H1 (cell line): ENCODE measurements at regions of chr10 and their contacts with region 1.

Region 1: GRCh38 chr10:80662577-80663261 is 125.0 kb downstream of the SH2D4B start:
- DNase-seq: peak; percentile 75 to 98
- H3K4me3 ChIP-seq: peak overlapping the region in 3 of 4 experiments; percentile 21 to 51 (median 43); a peak in 5 of 8 replicates
- H3K27ac ChIP-seq: no peak overlapping the region
- H3K4me1 ChIP-seq: peaks cover 0 to 4% (median 3%) of the 10 kb centered on the region in 4 experiments; a peak in 3 of 7 replicates
- H3K27me3 ChIP-seq: peaks cover 0 to 2% (median 0%) of the 10 kb centered on the region in 4 experiments; a peak in 2 of 7 replicates
- CTCF ChIP-seq: peak; percentile 83 to 88 (median 86)
- EP300 ChIP-seq: no peak
- POLR2A ChIP-seq: no peak
- RAD21 ChIP-seq: peak; percentile 79 to 82

Region 2: GRCh38 chr10:80647173-80647811 is 15.4 kb before region 1 on chr10:
- CTCF ChIA-PET with region 1: interaction called, 88 read pairs
- POLR2A ChIA-PET with region 1: interaction called, 3 read pairs
- DNase-seq: no peak
- H3K4me3 ChIP-seq: no peak overlapping the region
- H3K27ac ChIP-seq: no peak overlapping the region
- H3K4me1 ChIP-seq: no peaks in the 10 kb centered on the region
- H3K27me3 ChIP-seq: no peaks in the 10 kb centered on the region
- CTCF ChIP-seq: no peak
- EP300 ChIP-seq: no peak
- POLR2A ChIP-seq: no peak
- RAD21 ChIP-seq: no peak

Region 3: GRCh38 chr10:80684259-80684658 is 21.5 kb after region 1 on chr10:
- CTCF ChIA-PET with region 1: interaction called, 21 read pairs
- POLR2A ChIA-PET with region 1: no interaction called
- DNase-seq: no peak
- H3K4me3 ChIP-seq: no peak overlapping the region
- H3K27ac ChIP-seq: no peak overlapping the region
- H3K4me1 ChIP-seq: no peaks in the 10 kb centered on the region
- H3K27me3 ChIP-seq: no peaks in the 10 kb centered on the region
- CTCF ChIP-seq: no peak
- EP300 ChIP-seq: no peak
- POLR2A ChIP-seq: no peak
- RAD21 ChIP-seq: no peak

Region 4: GRCh38 chr10:80894797-80895467 is 232.2 kb after region 1 on chr10:
- CTCF ChIA-PET with region 1: interaction called, 11 read pairs
- POLR2A ChIA-PET with region 1: no interaction called
- DNase-seq: peak in 1 of 2 experiments; percentile 71
- H3K4me3 ChIP-seq: peak overlapping the region in 3 of 4 experiments; percentile 0 to 31 (median 11); a peak in 4 of 8 replicates
- H3K27ac ChIP-seq: no peak overlapping the region
- H3K4me1 ChIP-seq: peaks cover 9 to 18% (median 12%) of the 10 kb centered on the region in 4 experiments
- H3K27me3 ChIP-seq: peaks cover 11 to 58% (median 42%) of the 10 kb centered on the region in 4 experiments
- CTCF ChIP-seq: no peak
- EP300 ChIP-seq: no peak
- POLR2A ChIP-seq: no peak
- RAD21 ChIP-seq: no peak

Region 5: DNA sequence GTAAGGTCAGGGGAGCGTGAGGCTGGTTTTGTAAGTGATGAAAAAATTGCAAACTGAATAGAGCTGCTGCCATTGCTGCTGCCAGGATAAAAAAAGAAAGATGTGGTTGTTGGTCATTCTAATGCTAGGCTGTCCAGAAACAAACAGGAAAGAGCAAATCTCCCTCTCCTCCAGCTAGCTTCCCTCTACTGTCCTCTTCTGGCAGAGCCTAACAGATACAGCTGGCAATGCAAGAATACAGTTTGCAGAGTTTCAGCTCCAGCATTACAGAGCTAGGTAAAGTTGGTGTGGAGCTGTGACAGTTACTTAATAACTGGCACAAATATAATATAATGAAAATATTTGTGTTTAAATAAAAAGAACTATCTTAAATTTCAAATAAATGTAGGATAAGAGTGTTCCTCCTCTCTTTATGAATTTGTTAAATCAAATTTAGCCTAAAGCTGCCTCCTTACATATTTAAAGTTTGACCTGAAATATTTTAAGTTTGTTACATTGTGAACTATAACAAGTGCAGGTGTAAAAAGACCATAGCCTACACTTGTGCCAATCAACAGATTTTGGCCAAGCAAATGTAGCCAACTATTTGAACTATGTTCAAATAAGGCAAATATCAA is 282.7 kb after region 1 on chr10:
- CTCF ChIA-PET with region 1: interaction called, 41 read pairs
- POLR2A ChIA-PET with region 1: no interaction called
- DNase-seq: peak in 1 of 2 experiments; percentile 10
- H3K4me3 ChIP-seq: no peak overlapping the region
- H3K27ac ChIP-seq: no peak overlapping the region
- H3K4me1 ChIP-seq: peaks cover 0 to 5% (median 0%) of the 10 kb centered on the region in 4 experiments; a peak in 1 of 7 replicates
- H3K27me3 ChIP-seq: no peaks in the 10 kb centered on the region
- CTCF ChIP-seq: peak in 2 of 3 experiments; percentile 96 to 97; a peak in 3 of 4 replicates
- EP300 ChIP-seq: no peak
- POLR2A ChIP-seq: no peak
- RAD21 ChIP-seq: peak; percentile 95 to 98

Region 6: DNA sequence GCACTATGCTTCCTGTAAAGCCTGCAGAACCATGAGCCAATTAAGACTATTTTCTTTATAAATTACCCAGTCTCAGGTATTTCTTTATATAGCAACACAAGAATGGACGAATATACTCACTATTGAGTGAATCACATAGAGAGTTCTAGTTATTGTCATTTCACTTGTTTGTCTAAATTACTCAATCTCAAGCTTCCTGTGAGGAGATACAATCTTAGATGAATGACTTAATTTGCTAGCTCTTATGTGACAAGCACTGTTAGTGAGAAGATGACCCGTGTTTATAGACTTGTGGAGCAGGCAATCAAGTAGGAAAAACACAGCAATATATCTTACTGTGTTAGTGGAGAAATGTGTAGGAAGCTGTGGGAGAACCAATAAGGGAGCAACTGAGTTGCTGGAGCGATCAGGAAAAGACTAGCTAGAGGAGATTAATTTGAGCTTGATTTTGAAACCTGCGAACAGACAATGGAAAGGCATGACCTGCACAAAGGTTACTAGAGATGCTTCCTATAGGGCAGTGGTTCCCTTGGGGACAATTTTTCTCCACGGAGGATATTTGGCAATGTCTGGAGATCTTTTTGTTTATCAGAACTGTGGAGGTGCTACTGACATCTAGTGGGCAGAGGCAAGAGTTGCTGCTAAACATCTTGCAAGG is 356.1 kb after region 1 on chr10:
- CTCF ChIA-PET with region 1: interaction called, 53 read pairs
- POLR2A ChIA-PET with region 1: no interaction called
- DNase-seq: no peak
- H3K4me3 ChIP-seq: no peak overlapping the region
- H3K27ac ChIP-seq: no peak overlapping the region
- H3K4me1 ChIP-seq: no peaks in the 10 kb centered on the region
- H3K27me3 ChIP-seq: no peaks in the 10 kb centered on the region
- CTCF ChIP-seq: peak; percentile 49 to 91 (median 77)
- EP300 ChIP-seq: no peak
- POLR2A ChIP-seq: no peak
- RAD21 ChIP-seq: peak; percentile 79 to 82